ENCODE measurements at regions of chr1 and their contacts with region 1.

Region 1: DNA sequence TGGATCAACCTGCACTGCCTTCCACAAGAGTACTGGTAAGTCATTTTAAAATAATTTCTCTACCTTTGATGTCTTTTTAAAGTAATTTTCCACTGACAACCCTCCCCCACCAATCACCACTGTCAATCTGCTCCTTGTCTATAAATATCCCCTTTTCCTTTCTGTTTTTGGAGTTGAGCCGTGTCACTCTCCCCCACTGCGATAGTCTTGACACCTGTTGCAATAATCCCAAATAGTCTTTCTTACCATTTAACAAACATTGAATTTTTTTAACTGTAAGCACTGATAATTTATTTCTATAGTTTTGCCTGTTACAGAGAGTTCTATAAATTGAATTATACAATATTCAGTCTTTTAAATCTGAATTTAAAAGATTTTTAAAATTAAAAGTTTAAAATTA is 420.9 kb downstream of the COL11A1 start:
- DNase-seq: no peak
- H3K4me3 ChIP-seq: no peak overlapping the region
- H3K27ac ChIP-seq: no peak overlapping the region
- H3K4me1 ChIP-seq: no peaks in the 10 kb centered on the region
- H3K27me3 ChIP-seq: no peaks in the 10 kb centered on the region
- CTCF ChIP-seq: no peak
- POLR2A ChIP-seq: no peak

Region 2: DNA sequence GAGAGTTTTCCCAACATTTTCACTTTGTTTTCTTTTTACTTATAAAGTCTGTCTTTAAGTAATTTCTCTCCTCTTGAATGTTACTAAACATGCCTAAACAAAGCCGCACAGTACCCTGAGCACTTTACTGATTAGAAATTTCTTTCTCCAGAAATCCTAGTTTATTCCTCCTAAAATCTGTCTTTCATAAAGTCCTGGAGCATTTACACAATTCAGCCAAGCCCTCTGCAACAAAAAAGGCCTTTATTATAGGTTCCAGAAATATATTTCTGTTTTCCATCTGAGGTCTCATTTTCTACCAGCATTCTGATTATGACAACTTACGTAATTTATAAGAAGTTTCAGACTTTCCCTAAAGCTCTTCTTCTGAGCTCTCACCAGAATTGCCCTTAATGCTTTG is 141.1 kb before region 1 on chr1:
- intact Hi-C with region 1: loop called (anchors 5 kb)
- DNase-seq: no peak
- H3K4me3 ChIP-seq: no peak overlapping the region
- H3K27ac ChIP-seq: no peak overlapping the region
- H3K4me1 ChIP-seq: no peaks in the 10 kb centered on the region
- H3K27me3 ChIP-seq: no peaks in the 10 kb centered on the region
- CTCF ChIP-seq: no peak
- POLR2A ChIP-seq: no peak

Region 3: GRCh38 chr1:102562380-102562779 is 125.0 kb before region 1 on chr1:
- intact Hi-C with region 1: no loop called
- DNase-seq: no peak
- H3K4me3 ChIP-seq: no peak overlapping the region
- H3K27ac ChIP-seq: no peak overlapping the region
- H3K4me1 ChIP-seq: no peaks in the 10 kb centered on the region
- H3K27me3 ChIP-seq: no peaks in the 10 kb centered on the region
- CTCF ChIP-seq: no peak
- POLR2A ChIP-seq: no peak

Measured in prostate gland (tissue), 2 donors.